ENCODE measurements at regions of chr2 and their contacts with region 1.

Region 1: GRCh38 chr2:175181104-175181876 is at the start of gene ATP5MC3:
- DNase-seq: peak; percentile 92
- ATAC-seq: peak; percentile 89
- H3K4me3 Mint-ChIP-seq: peak within 1 kb of the TSS; percentile 90
- H3K27ac Mint-ChIP-seq: peak within 1 kb of the TSS; percentile 86
- H3K4me1 Mint-ChIP-seq: peaks cover 25% of the 10 kb centered on the region
- H3K27me3 Mint-ChIP-seq: no peaks in the 10 kb centered on the region
- total RNA-seq, gene ATP5MC3: 203 to 208 TPM

Region 2: GRCh38 chr2:174971865-174972781 is 209.2 kb before region 1 on chr2:
- POLR2A ChIA-PET with region 1: no interaction called
- DNase-seq: no peak
- ATAC-seq: no peak
- H3K4me3 Mint-ChIP-seq: no peak overlapping the region
- H3K27ac Mint-ChIP-seq: no peak overlapping the region
- H3K4me1 Mint-ChIP-seq: peaks cover 5% of the 10 kb centered on the region
- H3K27me3 Mint-ChIP-seq: no peaks in the 10 kb centered on the region

Region 3: GRCh38 chr2:175167792-175168563 is 13.3 kb before region 1 on chr2 and contains the start of gene ATF2:
- POLR2A ChIA-PET with region 1: interaction called, 10 read pairs
- DNase-seq: peak; percentile 92
- ATAC-seq: peak; percentile 93
- H3K4me3 Mint-ChIP-seq: peak within 1 kb of the TSS; percentile 93
- H3K27ac Mint-ChIP-seq: peak within 1 kb of the TSS; percentile 91
- H3K4me1 Mint-ChIP-seq: peaks cover 16% of the 10 kb centered on the region
- H3K27me3 Mint-ChIP-seq: no peaks in the 10 kb centered on the region
- total RNA-seq, gene ATF2: 50.0 to 56.2 TPM

Region 4: GRCh38 chr2:175402571-175402970 is 221.3 kb after region 1 on chr2:
- POLR2A ChIA-PET with region 1: no interaction called
- DNase-seq: no peak
- ATAC-seq: no peak
- H3K4me3 Mint-ChIP-seq: no peak overlapping the region
- H3K27ac Mint-ChIP-seq: no peak overlapping the region
- H3K4me1 Mint-ChIP-seq: peaks cover 6% of the 10 kb centered on the region
- H3K27me3 Mint-ChIP-seq: peaks cover 18% of the 10 kb centered on the region